Psoas muscle (tissue), 8 donors: ENCODE measurements at regions of chr20 and their contacts with region 1.

Region 1: DNA sequence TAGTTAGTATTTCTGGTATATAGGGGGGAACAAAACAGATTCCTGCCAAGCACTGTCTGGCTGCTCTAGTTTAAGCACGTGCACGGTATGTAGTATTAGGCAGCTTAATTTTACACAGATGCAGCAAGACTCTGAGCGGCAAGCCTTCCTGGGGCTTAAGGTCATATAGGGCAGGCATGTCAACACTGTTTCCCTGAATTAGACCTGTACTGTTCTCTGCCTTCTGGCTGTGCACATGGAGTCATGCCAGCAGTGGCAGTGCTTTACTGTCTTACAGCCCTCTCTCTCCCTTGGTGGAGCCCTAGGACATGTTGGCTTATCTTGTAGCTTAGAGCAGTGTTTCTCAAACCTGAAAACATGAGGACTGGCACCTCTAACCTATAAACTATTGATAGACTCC is 56.6 kb downstream of the PHF20 start:
- DNase-seq: peak; percentile 70 to 91
- ATAC-seq: peak; percentile 92 to 96 (median 95)
- H3K4me3 ChIP-seq: no peak overlapping the region
- H3K27ac ChIP-seq: peak overlapping the region; percentile 72
- H3K4me1 ChIP-seq: peaks cover 34% of the 10 kb centered on the region
- H3K27me3 ChIP-seq: no peaks in the 10 kb centered on the region
- CTCF ChIP-seq: no peak

Region 2: DNA sequence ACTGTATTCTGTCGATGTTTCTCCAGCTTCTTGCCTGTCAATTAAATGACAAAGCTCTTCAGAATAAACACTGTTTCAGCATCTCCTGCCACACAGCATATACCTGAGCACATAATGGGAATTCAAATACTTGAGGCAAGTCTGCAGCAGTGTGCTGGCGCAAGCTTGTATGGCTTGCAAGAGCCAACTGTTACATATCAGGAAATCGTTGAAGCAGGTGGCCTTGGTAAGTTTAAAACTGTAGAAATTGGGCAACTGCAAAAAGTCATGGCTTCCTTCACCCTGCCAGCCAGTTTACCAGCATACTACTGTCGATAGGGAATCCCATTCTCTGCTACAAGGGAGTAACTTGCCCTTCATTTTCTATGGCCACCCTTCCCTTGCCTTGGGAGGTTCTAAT is 186.7 kb before region 1 on chr20:
- intact Hi-C with region 1: no loop called
- DNase-seq: no peak
- ATAC-seq: no peak
- H3K4me3 ChIP-seq: no peak overlapping the region
- H3K27ac ChIP-seq: no peak overlapping the region
- H3K4me1 ChIP-seq: peaks cover 30% of the 10 kb centered on the region
- H3K27me3 ChIP-seq: no peaks in the 10 kb centered on the region
- CTCF ChIP-seq: no peak

Region 3: GRCh38 chr20:35771689-35772562 is 56.5 kb before region 1 on chr20 and contains the start of gene PHF20:
- intact Hi-C with region 1: loop called in 1 of 2 experiments (anchors 5 kb)
- DNase-seq: peak; percentile 100
- ATAC-seq: peak; percentile 84 to 90 (median 87)
- H3K4me3 ChIP-seq: peak within 1 kb of the TSS; percentile 90
- H3K27ac ChIP-seq: peak within 1 kb of the TSS; percentile 96
- H3K4me1 ChIP-seq: peaks cover 57% of the 10 kb centered on the region
- H3K27me3 ChIP-seq: no peaks in the 10 kb centered on the region
- CTCF ChIP-seq: no peak
- total RNA-seq, gene PHF20: 57.7 to 97.9 (median 68.4) TPM

Region 4: GRCh38 chr20:35866418-35867197 is 38.2 kb after region 1 on chr20:
- intact Hi-C with region 1: loop called in 1 of 2 experiments (anchors 5 kb)
- DNase-seq: no peak
- ATAC-seq: peak in 1 of 4 donors; percentile 51
- H3K4me3 ChIP-seq: no peak overlapping the region
- H3K27ac ChIP-seq: peak overlapping the region; percentile 32
- H3K4me1 ChIP-seq: peaks cover 7% of the 10 kb centered on the region
- H3K27me3 ChIP-seq: no peaks in the 10 kb centered on the region
- CTCF ChIP-seq: no peak